ENCODE measurements at regions of chr2 and their contacts with region 1.

Region 1: GRCh38 chr2:210399440-210400041 is 77.0 kb downstream of the LANCL1 start:
- DNase-seq: peak; percentile 4
- ATAC-seq: peak; percentile 38; the same call in 1 of the 2 replicates
- H3K4me3 ChIP-seq: no peak overlapping the region
- H3K27ac ChIP-seq: no peak overlapping the region
- H3K4me1 ChIP-seq: no peaks in the 10 kb centered on the region
- H3K27me3 ChIP-seq: no peaks in the 10 kb centered on the region
- CTCF ChIP-seq: peak in 2 of 3 experiments; percentile 42 to 69; a peak in 4 of 6 replicates
- POLR2A ChIP-seq: no peak
- RAD21 ChIP-seq: peak; percentile 66

Region 2: GRCh38 chr2:209977386-209978239 is 421.9 kb before region 1 on chr2:
- CTCF ChIA-PET with region 1: interaction called, 4 read pairs
- POLR2A ChIA-PET with region 1: no interaction called
- RAD21 ChIA-PET with region 1: no interaction called
- intact Hi-C with region 1: loop called (anchors 5 kb)
- DNase-seq: peak; percentile 28
- ATAC-seq: peak; percentile 52; the same call in 1 of the 2 replicates
- H3K4me3 ChIP-seq: no peak overlapping the region
- H3K27ac ChIP-seq: no peak overlapping the region
- H3K4me1 ChIP-seq: no peaks in the 10 kb centered on the region
- H3K27me3 ChIP-seq: no peaks in the 10 kb centered on the region
- CTCF ChIP-seq: peak in 2 of 3 experiments; percentile 65 to 77; a peak in 3 of 6 replicates
- POLR2A ChIP-seq: no peak
- RAD21 ChIP-seq: peak; percentile 86

Region 3: DNA sequence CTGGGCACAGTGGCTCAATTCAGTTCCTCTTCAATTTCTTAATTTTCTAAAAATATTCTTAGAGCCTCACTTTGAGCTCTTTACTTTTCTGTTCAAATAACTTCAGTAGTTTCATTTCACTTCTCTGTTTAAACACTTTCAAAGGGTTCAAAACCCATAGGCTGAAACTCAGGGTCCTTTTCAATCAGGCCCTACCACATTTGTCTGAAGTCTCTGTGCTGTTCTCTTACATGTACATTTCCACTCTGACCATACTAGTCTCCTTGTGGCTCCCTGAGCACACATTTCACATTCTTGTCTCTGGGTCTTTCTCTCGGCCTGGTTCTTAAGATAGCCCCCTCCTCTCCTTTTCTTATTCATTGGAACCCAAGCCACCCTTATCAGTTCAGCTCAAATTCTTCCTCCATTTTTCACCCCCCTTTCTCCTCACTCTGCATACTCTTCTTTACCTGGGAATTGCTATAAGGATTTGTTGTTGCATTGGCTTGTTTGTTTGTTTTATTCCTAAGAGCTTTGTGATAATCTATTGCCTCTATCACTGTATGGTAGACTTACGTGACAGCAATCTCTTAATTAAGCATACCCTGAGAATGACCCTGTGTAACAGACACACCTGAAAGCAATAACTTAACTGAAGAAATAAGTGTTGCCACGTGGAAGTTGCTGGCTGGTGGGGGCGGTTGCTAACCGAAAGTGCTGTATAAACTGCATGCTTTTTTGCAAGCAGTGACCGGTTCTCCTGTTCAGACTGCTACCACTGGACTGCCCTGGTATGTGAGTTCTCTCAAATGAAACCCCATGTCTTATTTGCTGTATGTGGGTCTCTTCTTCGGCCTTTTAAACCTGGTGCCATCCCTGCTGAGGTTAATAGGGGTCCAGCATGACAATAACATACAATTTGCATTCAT is 146.6 kb before region 1 on chr2:
- CTCF ChIA-PET with region 1: interaction called, 32 read pairs
- POLR2A ChIA-PET with region 1: no interaction called
- RAD21 ChIA-PET with region 1: no interaction called
- intact Hi-C with region 1: loop called (anchors 1 kb)
- DNase-seq: no peak
- ATAC-seq: no peak
- H3K4me3 ChIP-seq: no peak overlapping the region
- H3K27ac ChIP-seq: no peak overlapping the region
- H3K4me1 ChIP-seq: no peaks in the 10 kb centered on the region
- H3K27me3 ChIP-seq: no peaks in the 10 kb centered on the region
- CTCF ChIP-seq: no peak
- POLR2A ChIP-seq: no peak
- RAD21 ChIP-seq: no peak